GM18951 (cell line): ENCODE measurements at regions of chr12 and their contacts with region 1.

Region 1: GRCh38 chr12:91561958-91562875 is 379.6 kb upstream of the DCN start:
- POLR2A ChIP-seq: no peak

Region 2: DNA sequence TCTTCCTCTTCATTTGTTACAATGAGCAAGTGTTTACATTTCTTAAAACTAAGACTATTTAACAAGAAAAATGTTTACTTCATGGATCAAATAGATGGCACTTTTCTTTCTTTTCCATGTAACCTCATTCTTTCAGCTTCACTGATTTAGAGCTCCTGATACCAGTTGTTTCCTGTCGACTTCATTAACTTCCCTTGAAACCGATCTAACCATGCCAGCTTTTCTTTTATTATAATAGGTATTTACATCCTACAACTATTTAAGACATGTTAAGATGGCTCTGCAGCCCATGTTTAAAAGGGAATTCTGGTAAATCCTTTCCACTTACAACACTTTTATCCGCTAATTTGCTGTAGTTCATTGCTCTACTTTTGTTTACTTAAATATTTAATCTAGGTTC is 272.3 kb before region 1 on chr12:
- in situ Hi-C with region 1: no loop called
- POLR2A ChIP-seq: no peak

Region 3: GRCh38 chr12:92462049-92462448 is 899.8 kb after region 1 on chr12:
- in situ Hi-C with region 1: no loop called
- POLR2A ChIP-seq: no peak

Region 4: GRCh38 chr12:92593734-92594402 is 1031.7 kb after region 1 on chr12:
- in situ Hi-C with region 1: loop called (anchors 25 kb)
- POLR2A ChIP-seq: no peak